B cell (primary cell): ENCODE measurements at regions of chr2 and their contacts with region 1.

Region 1: DNA sequence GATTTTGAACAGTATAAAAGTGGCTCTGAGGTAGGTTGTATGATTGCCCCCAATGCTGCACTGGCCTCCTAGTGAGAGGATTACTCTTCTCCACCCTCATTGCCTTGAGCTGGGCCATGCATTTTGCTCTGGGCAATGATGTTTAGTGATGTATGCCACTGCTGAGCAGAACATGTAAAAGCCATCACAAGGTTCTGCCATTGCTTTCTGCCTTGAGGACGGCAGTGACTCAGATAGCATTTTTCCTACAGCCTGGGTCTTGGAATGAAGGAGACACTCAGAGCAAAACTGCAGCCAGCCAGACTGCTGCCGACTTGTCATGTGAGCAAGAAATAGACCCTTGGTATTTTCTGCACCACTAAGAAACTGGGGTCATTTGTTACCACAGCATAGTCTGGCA is 27.6 kb downstream of the GPATCH11 start:
- DNase-seq: no peak
- ATAC-seq: no peak
- H3K4me3 ChIP-seq: no peak overlapping the region
- H3K4me3 Mint-ChIP-seq: no peak overlapping the region
- H3K27ac ChIP-seq: no peak overlapping the region
- H3K27ac Mint-ChIP-seq: no peak overlapping the region
- H3K4me1 ChIP-seq: no peaks in the 10 kb centered on the region
- H3K4me1 Mint-ChIP-seq: no peaks in the 10 kb centered on the region
- H3K27me3 ChIP-seq: no peaks in the 10 kb centered on the region
- H3K27me3 Mint-ChIP-seq: no peaks in the 10 kb centered on the region
- CTCF ChIP-seq: no peak

Region 2: DNA sequence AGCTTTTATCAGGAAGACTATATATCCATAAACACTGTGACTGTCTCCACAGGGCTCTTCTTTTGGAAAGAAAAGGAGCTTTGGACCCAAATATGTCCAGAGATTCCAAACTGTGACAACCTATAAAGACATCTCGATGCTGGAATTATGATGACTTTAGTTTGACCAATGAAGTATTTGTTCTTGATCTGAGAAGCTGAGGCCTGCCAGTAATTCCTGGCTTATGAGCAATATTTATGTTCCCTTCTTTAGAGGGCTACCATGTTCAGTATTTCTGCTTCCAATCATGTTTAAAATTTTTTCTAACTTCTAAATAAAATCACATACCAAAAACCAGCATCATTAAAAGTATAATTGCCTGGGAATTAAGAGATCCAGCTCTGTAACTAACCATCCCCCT is 555.1 kb before region 1 on chr2:
- CTCF ChIA-PET with region 1: no interaction called
- POLR2A ChIA-PET with region 1: no interaction called
- intact Hi-C with region 1: no loop called
- DNase-seq: no peak
- ATAC-seq: no peak
- H3K4me3 ChIP-seq: no peak overlapping the region
- H3K4me3 Mint-ChIP-seq: no peak overlapping the region
- H3K27ac ChIP-seq: no peak overlapping the region
- H3K27ac Mint-ChIP-seq: no peak overlapping the region
- H3K4me1 ChIP-seq: no peaks in the 10 kb centered on the region
- H3K4me1 Mint-ChIP-seq: no peaks in the 10 kb centered on the region
- H3K27me3 ChIP-seq: no peaks in the 10 kb centered on the region
- H3K27me3 Mint-ChIP-seq: no peaks in the 10 kb centered on the region
- CTCF ChIP-seq: no peak

Region 3: DNA sequence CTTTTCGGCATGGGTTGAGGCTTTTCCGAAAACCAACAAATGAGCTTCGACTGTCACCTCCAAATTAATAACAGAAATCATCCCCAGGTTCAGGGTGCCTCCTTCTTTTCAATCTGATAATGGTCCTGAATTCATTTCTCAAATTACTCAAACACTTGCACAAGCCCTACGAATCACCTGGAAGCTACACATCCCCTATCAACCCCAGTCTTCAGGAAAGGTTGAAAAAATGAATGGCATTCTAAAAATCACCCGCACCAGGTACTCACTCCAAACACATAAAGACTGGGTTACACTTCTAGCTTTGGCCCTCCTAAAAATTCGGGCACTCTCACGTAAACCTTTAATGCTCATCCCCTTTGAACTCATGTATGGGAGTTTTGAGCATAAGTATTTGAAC is 20.9 kb after region 1 on chr2:
- CTCF ChIA-PET with region 1: interaction called, 3 read pairs
- POLR2A ChIA-PET with region 1: no interaction called
- intact Hi-C with region 1: loop called (anchors 1 kb)
- DNase-seq: no peak
- ATAC-seq: no peak
- H3K4me3 ChIP-seq: no peak overlapping the region
- H3K4me3 Mint-ChIP-seq: no peak overlapping the region
- H3K27ac ChIP-seq: no peak overlapping the region
- H3K27ac Mint-ChIP-seq: no peak overlapping the region
- H3K4me1 ChIP-seq: no peaks in the 10 kb centered on the region
- H3K4me1 Mint-ChIP-seq: no peaks in the 10 kb centered on the region
- H3K27me3 ChIP-seq: no peaks in the 10 kb centered on the region
- H3K27me3 Mint-ChIP-seq: no peaks in the 10 kb centered on the region
- CTCF ChIP-seq: no peak

Region 4: DNA sequence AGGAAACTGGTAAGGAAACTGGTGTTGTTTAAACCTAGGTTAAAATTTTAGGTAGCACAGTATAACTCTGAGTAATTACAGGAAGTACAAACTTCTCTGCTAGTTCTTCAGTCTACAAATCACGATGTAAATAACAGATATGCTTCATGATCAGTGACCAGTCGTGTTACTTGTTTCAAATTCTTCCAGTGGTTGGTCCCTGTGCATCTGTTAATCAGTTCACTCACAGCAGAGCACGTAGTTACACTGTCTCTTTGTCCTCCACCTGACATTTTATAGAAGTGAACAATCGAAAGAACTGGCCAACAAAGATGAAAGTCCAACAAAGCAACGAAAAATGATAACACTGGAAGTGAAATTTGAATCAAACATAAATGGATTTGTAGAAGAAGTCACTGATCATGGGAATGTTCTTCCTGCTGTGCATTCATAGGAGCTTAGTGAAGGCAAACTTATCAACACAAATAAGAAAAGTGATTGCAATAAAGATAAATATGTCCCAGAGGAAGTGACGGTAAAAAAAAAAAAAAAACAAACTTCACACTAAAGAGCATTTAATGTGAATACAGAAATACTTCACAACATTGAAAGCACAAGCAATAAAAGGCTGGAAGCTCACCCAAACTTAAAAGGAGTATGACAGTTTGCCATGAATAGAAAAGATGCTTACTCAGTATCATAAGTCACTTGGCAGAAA is 37.8 kb after region 1 on chr2:
- CTCF ChIA-PET with region 1: no interaction called
- POLR2A ChIA-PET with region 1: no interaction called
- intact Hi-C with region 1: no loop called
- DNase-seq: peak; percentile 17
- ATAC-seq: peak; percentile 36
- H3K4me3 ChIP-seq: no peak overlapping the region
- H3K4me3 Mint-ChIP-seq: peak overlapping the region; percentile 20
- H3K27ac ChIP-seq: peak overlapping the region in 1 of 2 donors; percentile 13
- H3K27ac Mint-ChIP-seq: no peak overlapping the region
- H3K4me1 ChIP-seq: peaks cover 5 to 10% of the 10 kb centered on the region in 2 donors
- H3K4me1 Mint-ChIP-seq: peaks cover 29% of the 10 kb centered on the region
- H3K27me3 ChIP-seq: no peaks in the 10 kb centered on the region
- H3K27me3 Mint-ChIP-seq: no peaks in the 10 kb centered on the region
- CTCF ChIP-seq: no peak